ENCODE measurements at regions of chr10 and their contacts with region 1.

Region 1: GRCh38 chr10:30783939-30784500 is 154.5 kb upstream of the LYZL2 start:
- DNase-seq: peak; percentile 89
- ATAC-seq: peak; percentile 81
- H3K4me3 Mint-ChIP-seq: peak overlapping the region; percentile 70
- H3K27ac Mint-ChIP-seq: peak overlapping the region; percentile 64
- H3K4me1 Mint-ChIP-seq: peaks cover 32% of the 10 kb centered on the region
- H3K27me3 Mint-ChIP-seq: peaks cover 11% of the 10 kb centered on the region

Region 2: DNA sequence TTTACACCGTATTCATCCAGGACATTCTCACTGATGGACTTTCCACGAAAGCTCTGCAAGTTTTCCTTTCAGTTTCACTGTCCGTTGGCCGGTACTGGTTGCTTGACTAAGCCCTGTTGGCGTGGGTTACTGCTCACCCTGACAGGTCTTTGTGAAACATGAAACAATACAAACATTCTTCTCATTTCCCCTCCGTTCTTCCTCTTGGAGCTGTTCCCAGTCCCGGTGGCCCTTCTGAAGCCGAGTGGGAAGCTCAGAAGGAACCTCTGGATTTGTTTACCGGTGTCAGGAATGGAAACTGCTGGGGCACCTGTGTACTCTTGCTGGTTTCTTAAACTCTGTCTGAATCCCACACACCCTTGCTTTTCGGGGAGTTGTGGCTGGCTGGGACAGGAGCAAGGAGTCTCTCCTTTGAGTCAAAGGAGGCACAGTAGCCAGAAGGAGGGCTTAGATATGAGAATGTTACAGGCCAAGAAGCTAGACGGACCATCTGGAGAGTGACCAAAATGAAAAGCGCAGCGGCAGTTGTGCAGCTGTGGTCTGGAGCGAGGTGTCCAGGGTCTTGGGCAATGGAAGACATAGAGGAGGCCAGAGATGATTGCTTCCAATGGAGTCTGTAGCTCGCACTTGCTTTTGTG is 200.1 kb before region 1 on chr10:
- CTCF ChIA-PET with region 1: no interaction called
- POLR2A ChIA-PET with region 1: no interaction called
- DNase-seq: peak; percentile 29
- ATAC-seq: peak; percentile 59
- H3K4me3 Mint-ChIP-seq: peak overlapping the region; percentile 46
- H3K27ac Mint-ChIP-seq: peak overlapping the region; percentile 36
- H3K4me1 Mint-ChIP-seq: peaks cover 7% of the 10 kb centered on the region
- H3K27me3 Mint-ChIP-seq: peaks cover 5% of the 10 kb centered on the region

Region 3: DNA sequence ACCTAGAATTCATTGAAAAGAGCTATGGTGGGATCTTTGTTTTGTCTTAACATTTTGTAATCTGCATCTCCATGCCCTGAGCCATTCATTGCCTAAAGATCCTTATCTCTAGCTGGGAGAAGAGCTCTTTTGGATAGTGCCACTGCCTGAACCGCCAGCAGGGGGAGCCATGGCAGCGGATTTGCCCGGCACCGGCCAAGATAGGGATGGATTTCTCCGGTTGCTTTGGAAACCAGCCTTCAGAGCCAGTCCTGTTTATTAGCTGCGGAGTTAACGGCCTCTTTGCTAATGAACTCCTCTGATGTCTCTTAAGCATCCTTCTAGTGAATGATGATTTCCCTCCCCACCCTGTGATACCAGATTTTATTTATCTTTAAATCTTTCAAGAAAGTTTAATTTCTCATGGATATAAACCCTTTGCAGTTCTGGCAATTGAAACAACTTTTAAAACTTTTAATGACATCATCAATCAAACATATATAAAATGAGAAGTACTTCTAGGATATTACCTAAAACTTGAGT is 96.3 kb before region 1 on chr10:
- CTCF ChIA-PET with region 1: interaction called, 23 read pairs
- POLR2A ChIA-PET with region 1: no interaction called
- DNase-seq: peak; percentile 84
- ATAC-seq: peak; percentile 86
- H3K4me3 Mint-ChIP-seq: no peak overlapping the region
- H3K27ac Mint-ChIP-seq: no peak overlapping the region
- H3K4me1 Mint-ChIP-seq: peaks cover 29% of the 10 kb centered on the region
- H3K27me3 Mint-ChIP-seq: peaks cover 16% of the 10 kb centered on the region

Region 4: GRCh38 chr10:30751678-30752331 is 32.2 kb before region 1 on chr10:
- CTCF ChIA-PET with region 1: interaction called, 11 read pairs
- POLR2A ChIA-PET with region 1: no interaction called
- DNase-seq: no peak
- ATAC-seq: no peak
- H3K4me3 Mint-ChIP-seq: no peak overlapping the region
- H3K27ac Mint-ChIP-seq: peak overlapping the region; percentile 58
- H3K4me1 Mint-ChIP-seq: peaks cover 36% of the 10 kb centered on the region
- H3K27me3 Mint-ChIP-seq: no peaks in the 10 kb centered on the region

Region 5: GRCh38 chr10:30769361-30769760 is 14.7 kb before region 1 on chr10:
- CTCF ChIA-PET with region 1: interaction called, 33 read pairs
- POLR2A ChIA-PET with region 1: interaction called, 4 read pairs
- DNase-seq: no peak
- ATAC-seq: no peak
- H3K4me3 Mint-ChIP-seq: no peak overlapping the region
- H3K27ac Mint-ChIP-seq: no peak overlapping the region
- H3K4me1 Mint-ChIP-seq: peaks cover 4% of the 10 kb centered on the region
- H3K27me3 Mint-ChIP-seq: peaks cover 6% of the 10 kb centered on the region

Region 6: GRCh38 chr10:30840406-30841050 is 56.5 kb after region 1 on chr10:
- CTCF ChIA-PET with region 1: no interaction called
- POLR2A ChIA-PET with region 1: no interaction called
- DNase-seq: no peak
- ATAC-seq: no peak
- H3K4me3 Mint-ChIP-seq: no peak overlapping the region
- H3K27ac Mint-ChIP-seq: no peak overlapping the region
- H3K4me1 Mint-ChIP-seq: no peaks in the 10 kb centered on the region
- H3K27me3 Mint-ChIP-seq: no peaks in the 10 kb centered on the region

Region 7: DNA sequence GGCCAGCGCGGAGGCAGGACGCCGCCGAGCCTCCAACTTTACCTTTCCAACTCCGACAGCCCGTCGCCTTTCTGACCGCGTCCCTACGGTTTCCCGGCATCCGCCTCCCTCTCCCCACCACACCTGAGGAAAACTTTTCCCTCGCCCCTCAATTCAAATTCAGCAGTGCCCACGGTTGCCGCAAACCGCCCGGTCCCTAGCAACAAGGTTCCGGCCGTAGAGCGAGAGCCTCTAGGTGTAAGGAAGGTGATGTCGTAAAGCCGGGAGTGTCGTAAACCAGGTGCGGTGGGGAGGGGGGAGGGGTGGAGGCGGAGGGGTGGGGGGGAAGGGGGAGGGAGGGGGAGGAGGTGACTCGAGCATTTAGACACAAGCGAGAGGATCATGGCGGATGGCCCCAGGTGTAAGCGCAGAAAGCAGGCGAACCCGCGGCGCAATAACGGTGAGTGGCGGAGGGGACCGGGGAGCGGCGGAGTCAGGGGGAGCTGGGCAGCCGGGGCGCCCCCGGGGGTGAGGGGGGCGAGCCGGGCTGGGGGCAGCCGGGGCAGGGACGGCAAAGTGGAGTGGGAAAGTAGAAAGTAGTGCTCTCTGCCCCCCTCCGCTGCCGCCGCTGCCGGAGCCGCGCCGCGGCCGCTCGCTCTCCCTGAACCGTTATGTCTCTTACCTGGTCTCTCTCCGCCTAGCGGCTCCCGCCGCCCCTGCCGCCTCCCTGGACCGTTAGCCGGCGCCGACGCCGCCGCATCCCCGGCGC is 535.0 kb after region 1 on chr10 and contains the start of gene ZEB1:
- CTCF ChIA-PET with region 1: interaction called, 10 read pairs
- POLR2A ChIA-PET with region 1: interaction called, 3 read pairs
- DNase-seq: peak; percentile 95
- ATAC-seq: peak; percentile 66
- H3K4me3 Mint-ChIP-seq: peak within 1 kb of the TSS; percentile 96
- H3K27ac Mint-ChIP-seq: peak within 1 kb of the TSS; percentile 99
- H3K4me1 Mint-ChIP-seq: peaks cover 53% of the 10 kb centered on the region
- H3K27me3 Mint-ChIP-seq: no peaks in the 10 kb centered on the region
- total RNA-seq, gene ZEB1: 38.3 to 39.3 TPM

Region 8: GRCh38 chr10:31808258-31809218 is 1024.5 kb after region 1 on chr10:
- CTCF ChIA-PET with region 1: interaction called, 24 read pairs
- POLR2A ChIA-PET with region 1: no interaction called
- DNase-seq: peak; percentile 28
- ATAC-seq: peak; percentile 63
- H3K4me3 Mint-ChIP-seq: peak overlapping the region; percentile 53
- H3K27ac Mint-ChIP-seq: peak overlapping the region; percentile 75
- H3K4me1 Mint-ChIP-seq: peaks cover 7% of the 10 kb centered on the region
- H3K27me3 Mint-ChIP-seq: no peaks in the 10 kb centered on the region

Measured in activated CD8-positive, alpha-beta T cell treated with anti-CD3 and anti-CD28 coated beads, Interleukin-2, amount 10 ng/mL, durations not matched to agents 7 days and 5 days (primary cell).